ENCODE measurements at regions of chr20 and their contacts with region 1.

Region 1: DNA sequence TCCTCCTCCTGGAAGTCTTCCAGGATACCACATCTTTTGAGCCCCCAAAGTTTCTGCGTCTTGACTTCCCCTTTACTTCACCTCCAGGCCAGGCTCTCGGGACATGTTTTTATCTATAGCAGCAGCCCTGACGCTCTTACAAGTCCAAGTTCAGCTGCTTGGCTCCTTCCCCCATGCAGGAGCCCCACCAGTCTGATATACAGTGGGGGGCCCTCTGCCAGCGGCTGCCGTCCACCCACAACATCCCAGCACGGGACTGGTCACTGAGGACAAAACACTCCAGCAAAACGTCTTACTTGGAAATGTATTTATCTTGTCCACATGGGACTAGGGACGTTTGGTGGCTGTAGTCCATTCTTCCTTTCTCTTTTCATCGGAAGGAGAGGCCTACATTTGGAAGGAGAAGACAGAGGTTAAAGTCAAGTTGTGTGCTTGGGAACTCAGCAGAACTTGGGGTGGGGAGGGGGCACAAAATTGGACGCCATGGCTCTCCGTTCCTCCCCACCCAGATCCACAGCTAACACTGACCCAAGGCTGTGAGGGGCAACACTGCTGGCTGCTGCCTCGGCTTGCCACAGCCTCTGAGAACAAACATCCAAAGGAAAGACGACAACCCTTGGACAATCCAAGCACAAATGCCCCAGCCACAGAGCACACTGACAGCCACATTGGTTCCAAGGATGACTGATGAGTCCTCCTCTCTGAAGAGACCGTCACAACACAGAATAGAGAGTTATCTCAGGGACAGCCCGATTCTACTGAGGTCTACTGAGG is 79.2 kb downstream of the PRND start:
- DNase-seq: no peak
- H3K4me3 ChIP-seq: no peak overlapping the region
- H3K27ac ChIP-seq: no peak overlapping the region
- H3K4me1 ChIP-seq: no peaks in the 10 kb centered on the region
- H3K27me3 ChIP-seq: no peaks in the 10 kb centered on the region
- CTCF ChIP-seq: no peak
- EP300 ChIP-seq: no peak
- POLR2A ChIP-seq: no peak

Region 2: DNA sequence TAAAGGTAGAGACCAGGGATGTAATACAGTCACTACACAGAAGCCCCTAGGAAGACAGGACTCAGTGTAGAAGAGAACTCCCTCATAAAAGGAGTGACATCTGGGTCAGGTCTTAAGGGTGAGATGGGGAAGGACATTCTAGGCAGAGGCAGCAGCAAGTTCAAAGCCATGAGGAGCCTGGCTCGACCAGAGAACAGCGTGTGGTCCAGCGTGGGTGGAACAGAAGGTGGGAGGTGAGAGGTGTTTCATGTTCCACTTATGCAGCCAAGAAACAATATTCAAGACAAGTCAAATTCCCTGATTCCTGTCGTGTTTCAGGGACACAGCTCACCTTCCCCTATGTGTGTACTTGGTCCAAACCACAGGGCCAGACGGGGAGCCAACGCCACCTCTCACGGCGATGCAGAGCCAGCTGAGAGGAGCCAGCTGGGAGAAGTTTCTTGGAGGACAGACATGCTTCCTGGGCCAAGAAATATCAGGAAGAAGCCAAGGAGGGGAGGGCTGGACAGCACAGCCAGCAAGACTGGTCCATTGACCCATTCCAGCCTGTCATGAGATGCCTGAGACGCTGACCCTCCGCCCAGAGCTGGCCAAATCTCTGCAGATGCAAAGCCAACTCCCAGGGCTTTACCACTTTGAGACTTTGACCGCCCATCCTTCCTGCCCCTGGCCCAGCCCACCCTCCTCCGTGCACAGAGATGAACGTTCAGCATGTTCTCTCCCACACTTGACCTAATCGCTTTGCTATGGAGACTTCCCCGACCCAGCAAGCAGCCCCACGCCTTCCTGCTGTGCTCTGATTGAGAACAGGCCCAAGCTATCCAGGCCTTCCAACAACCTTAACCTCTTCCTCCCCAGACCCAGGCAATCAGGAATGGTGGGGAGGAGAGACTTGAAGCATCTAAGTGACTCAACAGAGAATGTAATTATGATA is 34.6 kb after region 1 on chr20:
- in situ Hi-C with region 1: no loop called
- intact Hi-C with region 1: loop called (anchors 2 kb)
- DNase-seq: peak; percentile 17
- H3K4me3 ChIP-seq: no peak overlapping the region
- H3K27ac ChIP-seq: peak overlapping the region in 1 of 4 donors; percentile 10
- H3K4me1 ChIP-seq: peaks cover 0 to 8% (median 0%) of the 10 kb centered on the region in 4 donors
- H3K27me3 ChIP-seq: no peaks in the 10 kb centered on the region
- CTCF ChIP-seq: no peak
- EP300 ChIP-seq: no peak
- POLR2A ChIP-seq: no peak

Region 3: DNA sequence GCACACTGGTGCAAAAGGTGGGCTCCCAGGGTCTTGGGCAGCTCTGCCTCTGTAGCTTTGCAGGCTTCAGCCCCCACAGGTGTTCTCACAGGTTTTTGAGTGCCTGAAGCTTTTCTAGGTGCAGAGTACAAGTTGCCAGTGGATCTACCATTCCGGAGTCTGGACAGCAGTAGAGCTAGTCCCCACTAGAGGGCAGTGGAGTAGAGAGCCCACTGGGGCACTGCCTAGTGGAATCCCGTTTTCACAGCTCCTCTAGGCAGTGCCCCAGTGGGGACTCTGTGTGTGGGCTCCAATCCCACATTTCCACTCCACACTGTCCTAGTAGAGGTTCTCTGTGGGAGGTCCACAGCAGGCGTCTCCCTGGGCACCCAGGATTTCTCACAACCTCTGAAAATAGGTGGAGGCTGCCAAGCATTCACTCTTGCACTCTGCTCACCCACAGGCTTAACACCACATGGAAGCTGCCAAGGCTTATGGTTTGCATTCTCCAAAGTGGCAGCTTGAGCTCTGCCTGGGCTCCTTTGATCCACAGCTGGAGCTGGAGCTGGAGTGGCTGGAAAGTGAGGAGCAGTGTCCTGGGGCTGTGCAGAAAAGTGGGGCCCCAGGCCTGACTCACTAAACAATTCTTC is 602.2 kb after region 1 on chr20:
- in situ Hi-C with region 1: no loop called
- intact Hi-C with region 1: no loop called
- DNase-seq: peak; percentile 9
- H3K4me3 ChIP-seq: no peak overlapping the region
- H3K27ac ChIP-seq: no peak overlapping the region
- H3K4me1 ChIP-seq: no peaks in the 10 kb centered on the region
- H3K27me3 ChIP-seq: no peaks in the 10 kb centered on the region
- CTCF ChIP-seq: peak in 2 of 5 experiments; percentile 40 to 41
- EP300 ChIP-seq: no peak
- POLR2A ChIP-seq: no peak